H1 (cell line): ENCODE measurements at regions of chr20 and their contacts with region 1.

Region 1: DNA sequence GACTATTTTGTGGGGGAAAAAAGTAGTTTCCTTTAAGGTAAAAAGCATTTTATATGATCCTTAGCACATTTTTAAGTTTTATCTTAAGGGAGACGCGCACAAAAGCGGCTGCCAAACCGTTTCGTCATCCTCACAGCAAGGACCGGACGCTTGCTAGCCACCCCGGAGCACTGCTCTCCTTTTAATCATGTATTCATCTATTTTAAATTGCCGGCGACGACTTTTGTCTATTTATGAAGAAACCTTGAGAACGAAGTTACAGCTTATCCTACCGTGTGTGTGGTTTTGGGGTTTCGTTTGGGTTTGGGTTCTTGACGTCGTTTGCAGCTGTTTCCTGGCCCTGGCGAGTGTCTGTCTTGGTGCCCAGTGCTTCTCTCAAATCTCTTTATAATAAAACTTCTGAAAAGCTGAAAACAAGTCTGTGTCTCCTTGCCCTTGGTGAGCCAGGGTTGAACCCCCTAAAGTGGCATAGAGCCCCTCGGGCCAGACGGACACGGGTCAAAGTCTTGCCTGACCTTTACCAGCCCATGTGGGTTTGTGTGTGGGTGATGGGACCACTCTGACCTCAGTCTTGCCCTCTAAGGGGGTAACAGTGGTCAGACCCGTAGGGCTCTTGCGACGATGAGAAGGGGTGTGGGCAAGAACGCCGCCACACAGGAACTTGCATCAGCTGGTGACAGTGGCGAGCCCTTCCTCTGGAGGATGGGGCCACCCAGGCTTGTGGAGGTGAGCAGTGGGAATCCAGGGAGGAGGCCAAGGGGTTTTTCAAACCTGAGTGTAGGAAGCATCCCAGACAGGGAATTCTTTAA is 117.6 kb downstream of the JPH2 start:
- DNase-seq: peak in 1 of 2 experiments; percentile 22
- H3K4me3 ChIP-seq: no peak overlapping the region
- H3K27ac ChIP-seq: no peak overlapping the region
- H3K4me1 ChIP-seq: peaks cover 0 to 7% (median 1%) of the 10 kb centered on the region in 4 experiments; a peak in 3 of 7 replicates
- H3K27me3 ChIP-seq: no peaks in the 10 kb centered on the region; a peak in 1 of 7 replicates
- CTCF ChIP-seq: no peak
- EP300 ChIP-seq: no peak
- POLR2A ChIP-seq: no peak
- RAD21 ChIP-seq: no peak

Region 2: DNA sequence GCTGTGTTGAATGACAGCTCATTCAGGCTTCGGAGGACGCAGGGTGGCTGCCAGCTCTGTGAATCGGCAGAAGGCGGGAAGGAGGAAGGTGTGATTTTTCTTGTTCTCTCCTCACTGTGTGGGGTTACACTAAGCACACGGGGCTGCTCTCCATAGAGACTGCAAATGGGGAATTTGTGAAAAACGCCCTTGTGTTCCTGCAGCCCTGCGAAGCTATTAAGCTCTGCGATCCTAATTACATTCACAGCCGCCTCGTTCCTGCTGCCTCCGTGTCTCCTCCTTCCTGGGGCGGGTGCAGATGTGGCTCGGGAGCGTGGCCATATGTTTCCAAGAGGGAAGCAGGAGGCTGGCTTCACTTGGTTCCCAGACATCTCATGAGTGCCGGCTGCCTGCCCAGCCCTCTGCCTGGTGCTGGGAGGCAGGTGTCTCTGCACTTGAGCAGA is 30.7 kb before region 1 on chr20:
- CTCF ChIA-PET with region 1: no interaction called
- POLR2A ChIA-PET with region 1: no interaction called
- DNase-seq: peak in 1 of 2 experiments; percentile 30
- H3K4me3 ChIP-seq: no peak overlapping the region
- H3K27ac ChIP-seq: no peak overlapping the region
- H3K4me1 ChIP-seq: no peaks in the 10 kb centered on the region
- H3K27me3 ChIP-seq: no peaks in the 10 kb centered on the region; a peak in 1 of 7 replicates
- CTCF ChIP-seq: no peak
- EP300 ChIP-seq: no peak
- POLR2A ChIP-seq: no peak
- RAD21 ChIP-seq: no peak

Region 3: DNA sequence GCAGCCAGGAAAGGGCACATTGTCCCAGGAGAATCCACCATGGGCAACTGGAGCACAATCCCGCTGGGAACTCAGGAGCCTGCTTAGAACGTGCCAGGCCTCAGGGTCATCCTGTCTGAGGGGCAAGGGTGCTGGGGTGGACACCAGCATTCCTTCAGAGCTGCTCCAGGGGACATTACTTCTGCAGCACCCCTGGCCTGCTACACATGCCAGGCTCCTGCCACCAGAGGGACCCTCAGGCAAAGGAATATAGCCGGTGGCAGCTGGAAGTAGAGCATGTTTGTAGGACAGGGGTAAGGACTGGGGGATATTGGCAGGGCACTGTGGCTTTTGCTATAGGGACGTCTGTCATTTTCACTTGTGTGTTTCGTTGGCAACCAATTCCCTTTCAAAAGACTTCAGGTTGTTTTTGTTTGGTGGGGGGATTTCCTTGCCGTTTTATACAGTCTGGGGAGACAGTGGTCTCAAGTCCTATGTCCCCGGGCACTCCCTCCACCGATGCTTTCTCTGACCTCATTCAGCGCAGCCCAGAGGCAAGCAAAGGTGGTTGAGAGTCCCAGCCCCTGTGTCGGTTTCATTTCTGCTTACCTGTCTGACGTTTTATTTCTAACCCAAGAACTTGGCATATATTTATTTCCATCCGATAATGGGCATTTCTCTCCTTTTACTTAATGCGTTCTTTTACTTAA is 13.3 kb before region 1 on chr20:
- CTCF ChIA-PET with region 1: interaction called, 13 read pairs
- POLR2A ChIA-PET with region 1: no interaction called
- DNase-seq: peak; percentile 29 to 69
- H3K4me3 ChIP-seq: no peak overlapping the region
- H3K27ac ChIP-seq: no peak overlapping the region
- H3K4me1 ChIP-seq: no peaks in the 10 kb centered on the region
- H3K27me3 ChIP-seq: no peaks in the 10 kb centered on the region
- CTCF ChIP-seq: peak; percentile 82 to 91 (median 84)
- EP300 ChIP-seq: no peak
- POLR2A ChIP-seq: no peak
- RAD21 ChIP-seq: peak; percentile 91 to 96